MCF 10A (cell line): ENCODE measurements at regions of chr5 and their contacts with region 1.

Region 1: DNA sequence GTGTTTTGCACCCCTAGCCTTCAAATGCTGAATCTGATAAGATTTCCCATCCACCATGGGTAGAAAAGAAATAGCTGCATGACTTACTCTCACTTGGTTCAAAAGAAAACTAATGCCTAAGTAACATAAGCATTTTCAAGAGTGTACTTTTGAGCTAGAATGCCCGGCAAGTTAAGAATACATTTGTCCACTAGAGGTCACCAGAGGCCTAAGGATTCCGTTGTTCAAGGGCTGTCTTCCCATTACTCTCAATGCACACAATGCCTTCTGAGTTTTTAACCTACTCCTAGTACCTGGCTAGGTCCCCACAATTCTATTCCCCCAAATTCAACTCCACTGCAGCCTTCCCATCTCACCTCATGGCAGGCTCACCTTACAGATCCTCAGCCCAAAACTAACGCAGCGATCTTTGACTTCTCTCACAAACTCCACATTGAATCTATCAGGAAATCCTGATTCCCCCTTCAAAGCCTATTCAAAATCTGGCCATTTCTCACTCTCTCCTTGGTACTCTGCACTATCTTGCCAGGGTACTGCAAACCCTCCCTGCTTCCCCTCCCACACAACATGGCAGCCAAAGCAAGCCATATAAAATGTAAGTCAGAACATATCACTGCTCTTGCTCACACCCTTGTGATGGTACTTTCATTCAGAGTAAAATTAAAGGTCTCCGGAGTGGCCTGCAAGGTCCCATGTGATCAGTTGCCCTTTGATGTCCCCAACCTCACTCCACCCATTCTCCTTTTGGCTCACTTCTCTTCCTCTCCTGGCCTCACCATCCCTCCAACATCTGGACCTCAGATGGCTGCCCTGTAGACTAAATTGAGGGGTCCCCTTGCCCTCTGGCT is 13.4 kb downstream of the OXCT1 start:
- DNase-seq: peak; percentile 81
- H3K4me3 Mint-ChIP-seq: no peak overlapping the region
- H3K27ac Mint-ChIP-seq: no peak overlapping the region
- H3K4me1 Mint-ChIP-seq: no peaks in the 10 kb centered on the region
- H3K27me3 Mint-ChIP-seq: no peaks in the 10 kb centered on the region
- CTCF ChIP-seq: peak; percentile 73

Region 2: GRCh38 chr5:41617843-41618515 is 238.9 kb before region 1 on chr5:
- CTCF ChIA-PET with region 1: no interaction called
- POLR2A ChIA-PET with region 1: no interaction called
- intact Hi-C with region 1: no loop called
- DNase-seq: no peak
- H3K4me3 Mint-ChIP-seq: no peak overlapping the region
- H3K27ac Mint-ChIP-seq: no peak overlapping the region
- H3K4me1 Mint-ChIP-seq: no peaks in the 10 kb centered on the region
- H3K27me3 Mint-ChIP-seq: no peaks in the 10 kb centered on the region
- CTCF ChIP-seq: no peak

Region 3: DNA sequence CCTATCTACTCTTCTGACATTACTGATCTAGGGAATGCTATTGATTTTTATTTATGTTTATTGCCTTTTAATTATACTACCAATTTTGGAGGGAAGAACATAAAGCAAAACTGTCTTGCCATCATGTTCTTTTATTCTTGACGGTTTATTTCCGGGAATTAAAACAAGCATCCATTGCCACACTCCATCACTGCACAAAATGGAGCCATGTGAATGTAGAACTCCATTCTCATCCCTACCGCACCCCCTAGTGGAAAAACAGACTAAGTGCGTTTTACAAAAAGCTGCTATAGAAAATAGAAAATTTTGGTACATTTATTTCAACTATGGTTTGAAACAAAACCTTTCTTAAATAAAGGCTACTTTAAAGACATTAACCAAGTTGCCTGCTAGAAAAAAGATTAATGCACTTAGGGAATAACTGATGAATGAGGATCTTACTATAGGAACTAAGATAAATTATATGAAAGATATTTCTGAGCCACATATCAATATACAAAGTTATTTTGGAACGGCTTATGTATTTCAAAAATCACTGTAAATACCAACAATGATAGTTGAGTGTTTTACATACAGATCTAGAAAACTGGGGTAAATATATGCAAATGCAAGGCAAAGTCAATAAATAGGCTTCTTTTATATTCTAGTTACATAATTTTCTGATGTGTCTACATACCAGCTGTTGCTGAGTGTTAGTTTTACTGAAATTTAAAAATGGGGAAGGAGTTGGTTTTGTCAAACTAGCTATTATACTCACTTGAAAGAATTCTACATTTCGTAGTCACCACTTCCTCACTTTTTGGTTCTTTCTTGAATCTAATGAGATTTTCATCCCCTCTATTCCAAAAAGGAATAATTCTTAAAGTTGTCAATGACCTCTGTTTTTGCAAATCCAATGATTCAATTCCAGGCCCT is 13.2 kb before region 1 on chr5:
- CTCF ChIA-PET with region 1: interaction called, 38 read pairs
- POLR2A ChIA-PET with region 1: no interaction called
- intact Hi-C with region 1: no loop called
- DNase-seq: peak; percentile 71
- H3K4me3 Mint-ChIP-seq: no peak overlapping the region
- H3K27ac Mint-ChIP-seq: no peak overlapping the region
- H3K4me1 Mint-ChIP-seq: no peaks in the 10 kb centered on the region
- H3K27me3 Mint-ChIP-seq: no peaks in the 10 kb centered on the region
- CTCF ChIP-seq: peak; percentile 70

Region 4: DNA sequence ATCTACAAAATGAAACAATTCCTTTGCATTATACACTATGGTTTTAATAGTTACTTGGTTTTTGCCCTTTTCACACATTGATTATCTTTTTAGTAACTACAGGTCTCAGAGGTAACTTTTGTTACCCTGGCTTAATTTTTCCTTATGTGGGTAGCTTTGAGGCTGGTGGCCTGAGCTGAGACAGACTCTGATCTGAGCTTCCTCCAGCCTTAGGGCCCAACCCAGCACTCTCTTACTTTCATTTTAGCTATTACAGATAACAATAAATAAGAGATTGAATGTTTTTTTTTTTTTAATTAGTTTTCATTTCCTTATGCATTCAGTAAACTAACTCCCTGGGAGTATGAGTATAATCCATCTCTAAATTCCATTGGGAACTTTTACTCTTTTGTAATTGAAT is 28.4 kb after region 1 on chr5:
- CTCF ChIA-PET with region 1: no interaction called
- POLR2A ChIA-PET with region 1: no interaction called
- intact Hi-C with region 1: no loop called
- DNase-seq: no peak
- H3K4me3 Mint-ChIP-seq: no peak overlapping the region
- H3K27ac Mint-ChIP-seq: no peak overlapping the region
- H3K4me1 Mint-ChIP-seq: no peaks in the 10 kb centered on the region
- H3K27me3 Mint-ChIP-seq: no peaks in the 10 kb centered on the region
- CTCF ChIP-seq: no peak

Region 5: DNA sequence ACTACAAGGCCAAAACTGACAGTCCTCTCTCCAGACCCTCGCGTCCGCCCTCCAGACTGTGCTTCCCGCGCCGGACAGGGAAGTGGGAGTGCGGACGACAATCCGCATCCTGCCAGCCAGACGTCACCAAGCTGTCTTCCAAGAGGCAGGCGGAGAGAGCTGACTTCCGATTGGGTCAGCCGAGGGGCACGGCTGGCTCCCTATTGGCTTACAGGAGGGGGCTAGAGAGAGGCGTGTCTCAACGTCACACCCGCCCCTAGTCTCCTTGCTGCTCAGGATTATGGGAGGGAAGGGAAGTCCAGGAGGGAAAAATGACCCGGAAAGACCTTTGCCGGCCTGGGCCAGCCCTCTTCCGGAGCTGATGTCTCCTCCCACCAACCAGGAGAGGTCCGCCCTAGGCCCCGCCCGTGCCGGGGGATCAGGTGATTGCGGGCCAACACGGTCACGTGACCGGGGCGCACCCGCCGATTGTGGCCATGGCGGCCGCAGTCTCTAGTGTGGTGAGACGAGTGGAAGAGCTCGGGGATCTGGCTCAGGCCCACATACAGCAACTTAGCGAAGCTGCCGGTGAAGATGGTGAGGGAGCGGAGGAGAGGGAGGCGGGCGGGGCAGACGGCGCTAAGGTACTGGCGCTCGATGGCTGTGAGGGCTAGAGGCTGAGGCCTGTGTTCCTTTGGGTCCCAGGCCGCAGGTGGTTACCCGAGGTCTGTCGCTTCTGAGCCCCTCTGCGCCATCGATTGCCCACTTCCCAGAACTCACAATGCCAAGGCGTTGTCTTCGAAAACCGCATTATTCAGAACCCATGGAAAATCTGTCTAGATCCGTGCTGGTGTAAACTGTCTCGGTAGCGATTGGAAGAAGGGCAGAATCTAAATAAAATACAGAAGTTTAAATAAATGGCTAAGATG is 47.3 kb after region 1 on chr5 and contains the start of gene RIMOC1:
- CTCF ChIA-PET with region 1: interaction called, 3 read pairs
- POLR2A ChIA-PET with region 1: interaction called, 12 read pairs
- intact Hi-C with region 1: loop called (anchors 5 kb)
- DNase-seq: peak; percentile 99
- H3K4me3 Mint-ChIP-seq: peak within 1 kb of the TSS; percentile 97
- H3K27ac Mint-ChIP-seq: peak within 1 kb of the TSS; percentile 100
- H3K4me1 Mint-ChIP-seq: peaks cover 36% of the 10 kb centered on the region
- H3K27me3 Mint-ChIP-seq: no peaks in the 10 kb centered on the region
- CTCF ChIP-seq: no peak
- total RNA-seq, gene RIMOC1: 40.4 and 45.4 TPM in 2 replicates

Region 6: DNA sequence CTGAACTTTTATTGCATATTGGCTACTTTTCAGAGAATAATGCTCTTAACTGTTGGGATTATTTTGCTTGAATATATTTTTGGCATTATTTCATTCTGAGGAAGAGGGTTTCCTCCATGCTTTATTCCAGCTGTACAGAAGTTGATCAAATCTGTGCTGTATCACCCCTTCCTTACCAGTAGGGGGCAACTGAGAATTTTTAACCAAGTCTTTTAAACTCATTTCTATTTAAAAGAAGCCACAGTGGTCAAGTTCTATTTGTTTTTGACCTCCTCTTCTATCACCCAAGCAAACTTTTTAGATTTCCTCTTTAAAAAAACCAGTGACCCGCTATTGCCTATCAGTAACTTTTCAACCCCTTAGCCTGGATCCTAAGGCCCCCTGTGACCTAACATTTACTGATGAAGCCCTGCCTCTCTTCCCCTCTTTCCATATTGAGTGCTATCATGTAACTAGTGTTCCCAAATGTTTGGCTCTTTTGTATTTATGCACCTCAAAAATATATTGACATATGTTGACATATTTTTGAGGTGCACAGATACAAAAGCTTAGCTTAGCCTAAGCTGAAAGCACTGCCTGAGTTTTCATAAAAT is 148.8 kb after region 1 on chr5:
- CTCF ChIA-PET with region 1: interaction called, 3 read pairs
- POLR2A ChIA-PET with region 1: no interaction called
- intact Hi-C with region 1: loop called (anchors 5 kb)
- DNase-seq: peak; percentile 33
- H3K4me3 Mint-ChIP-seq: no peak overlapping the region
- H3K27ac Mint-ChIP-seq: no peak overlapping the region
- H3K4me1 Mint-ChIP-seq: no peaks in the 10 kb centered on the region
- H3K27me3 Mint-ChIP-seq: no peaks in the 10 kb centered on the region
- CTCF ChIP-seq: peak; percentile 69

Region 7: GRCh38 chr5:42423285-42424165 is 566.7 kb after region 1 on chr5 and contains the start of gene GHR:
- CTCF ChIA-PET with region 1: interaction called, 7 read pairs
- POLR2A ChIA-PET with region 1: no interaction called
- intact Hi-C with region 1: loop called (anchors 2 kb)
- DNase-seq: peak; percentile 93
- H3K4me3 Mint-ChIP-seq: no peak within 1 kb of the TSS
- H3K27ac Mint-ChIP-seq: no peak within 1 kb of the TSS
- H3K4me1 Mint-ChIP-seq: no peaks in the 10 kb centered on the region
- H3K27me3 Mint-ChIP-seq: no peaks in the 10 kb centered on the region
- CTCF ChIP-seq: peak; percentile 69
- total RNA-seq, gene GHR: 1.8 and 1.9 TPM in 2 replicates

Region 8: DNA sequence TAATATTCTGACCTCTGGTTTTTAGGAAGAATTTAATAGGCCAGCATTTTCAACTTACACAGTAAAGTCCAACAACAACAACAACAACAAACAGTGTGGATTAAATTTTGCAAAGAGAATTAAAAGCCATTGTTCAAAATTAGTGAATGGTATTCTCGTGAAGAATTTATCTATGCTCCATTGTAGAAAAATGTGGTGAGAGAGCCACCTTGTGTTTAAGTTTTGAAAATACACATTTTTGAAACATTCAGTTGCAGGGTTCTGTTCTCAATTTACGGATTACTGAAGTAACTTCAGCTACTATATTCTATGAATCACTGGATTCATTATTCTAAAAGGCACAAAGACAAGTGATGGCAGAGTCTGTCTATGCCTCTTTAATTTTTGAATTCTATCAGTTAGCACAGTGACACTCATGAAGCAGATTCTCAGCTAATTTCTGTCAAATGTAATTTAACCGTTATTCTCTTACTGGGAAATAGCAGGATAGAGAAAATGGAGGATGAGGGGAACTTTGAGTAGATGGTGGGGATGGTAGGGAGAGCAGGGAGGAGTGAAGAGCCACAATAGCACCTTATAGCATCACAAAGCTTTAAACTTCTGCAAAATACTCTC is 910.7 kb after region 1 on chr5:
- CTCF ChIA-PET with region 1: interaction called, 26 read pairs
- POLR2A ChIA-PET with region 1: no interaction called
- intact Hi-C with region 1: loop called (anchors 2 kb)
- DNase-seq: peak; percentile 58
- H3K4me3 Mint-ChIP-seq: no peak overlapping the region
- H3K27ac Mint-ChIP-seq: no peak overlapping the region
- H3K4me1 Mint-ChIP-seq: peaks cover 1% of the 10 kb centered on the region
- H3K27me3 Mint-ChIP-seq: no peaks in the 10 kb centered on the region
- CTCF ChIP-seq: peak; percentile 64